Transverse colon (tissue), 4 donors: ENCODE measurements at regions of chr20 and their contacts with region 1.

Region 1: GRCh38 chr20:47677635-47678453 is 107.4 kb downstream of the SULF2 start:
- DNase-seq: peak; percentile 42
- H3K4me3 ChIP-seq: no peak overlapping the region
- H3K27ac ChIP-seq: no peak overlapping the region
- H3K4me1 ChIP-seq: peaks cover 0 to 10% (median 3%) of the 10 kb centered on the region in 4 donors
- H3K27me3 ChIP-seq: no peaks in the 10 kb centered on the region
- CTCF ChIP-seq: peak; percentile 61 to 75 (median 70)
- EP300 ChIP-seq: no peak
- POLR2A ChIP-seq: no peak

Region 2: DNA sequence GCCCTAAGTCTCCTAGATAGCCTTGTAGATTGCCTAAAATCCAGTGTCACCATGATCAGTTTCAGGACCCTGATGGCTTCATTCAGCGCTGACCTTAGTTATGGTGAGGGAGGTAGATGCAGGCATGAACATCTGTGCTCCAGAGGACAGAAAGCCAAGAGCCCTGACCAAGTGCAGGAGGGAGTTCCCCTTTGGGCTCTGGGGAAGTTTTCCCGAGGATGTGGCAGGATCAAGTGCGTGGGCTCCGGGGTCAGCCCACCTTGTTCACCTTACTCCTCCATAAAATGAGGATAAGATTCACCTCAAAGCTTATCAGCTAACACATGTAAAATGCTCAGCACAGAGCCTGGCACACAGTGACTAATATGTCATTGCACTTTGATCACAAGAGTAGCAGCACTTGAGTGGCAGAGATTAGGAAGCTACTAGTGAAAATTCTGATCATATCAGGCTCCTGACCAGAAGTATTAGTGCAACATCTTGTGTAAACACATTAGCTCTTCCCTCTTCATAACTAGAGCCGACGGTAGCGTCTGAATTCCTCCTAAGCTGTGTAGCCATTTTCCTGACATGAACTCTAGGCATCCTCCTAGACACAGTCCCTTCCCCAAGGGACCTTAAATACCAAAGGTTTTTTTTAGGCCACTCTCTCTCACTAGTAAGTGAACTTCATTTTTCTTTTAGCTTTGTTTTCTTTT is 17.8 kb before region 1 on chr20:
- in situ Hi-C with region 1: no loop called
- intact Hi-C with region 1: no loop called
- DNase-seq: no peak
- H3K4me3 ChIP-seq: no peak overlapping the region
- H3K27ac ChIP-seq: no peak overlapping the region
- H3K4me1 ChIP-seq: peaks cover 0 to 8% (median 4%) of the 10 kb centered on the region in 4 donors
- H3K27me3 ChIP-seq: no peaks in the 10 kb centered on the region
- CTCF ChIP-seq: no peak
- EP300 ChIP-seq: no peak
- POLR2A ChIP-seq: no peak

Region 3: DNA sequence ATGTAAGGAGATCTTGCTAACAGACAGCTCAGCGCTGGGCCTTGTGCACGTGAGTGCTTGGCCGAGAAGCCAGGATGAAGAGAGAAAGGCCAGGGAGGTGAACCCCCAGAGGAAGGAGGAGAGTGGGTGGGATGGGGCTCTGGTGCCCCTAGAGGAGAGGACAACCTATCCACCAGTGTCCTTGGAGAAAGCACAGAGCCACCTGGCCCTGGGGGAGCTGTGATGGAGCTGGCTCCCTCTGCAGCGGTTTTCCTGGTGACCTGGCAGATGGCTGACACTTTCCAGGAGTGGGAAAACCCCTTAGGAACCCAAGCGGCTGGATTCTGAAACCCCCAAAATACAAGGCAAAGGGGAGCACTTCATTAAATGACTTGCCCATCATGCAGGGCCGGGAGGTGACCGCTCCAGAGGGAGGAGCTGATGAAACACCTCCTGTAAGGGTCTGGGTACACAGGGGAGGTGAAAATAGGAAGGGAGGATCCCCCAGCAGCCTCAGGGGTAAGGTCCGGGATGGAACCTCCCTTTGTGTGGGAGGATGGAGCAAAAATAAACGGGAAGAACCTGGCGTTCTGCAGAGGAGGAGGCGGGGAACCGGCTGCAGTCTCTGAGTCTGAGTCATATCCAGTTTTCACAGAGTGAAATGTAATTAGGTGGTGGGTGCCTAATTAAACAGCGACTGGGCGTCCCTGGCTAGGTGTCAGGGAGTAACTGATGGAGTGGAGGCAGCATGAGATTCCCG is 27.1 kb after region 1 on chr20:
- in situ Hi-C with region 1: no loop called
- intact Hi-C with region 1: no loop called
- DNase-seq: no peak
- H3K4me3 ChIP-seq: no peak overlapping the region
- H3K27ac ChIP-seq: peak overlapping the region in 2 of 4 donors; percentile 28 to 50
- H3K4me1 ChIP-seq: peaks cover 0 to 6% (median 0%) of the 10 kb centered on the region in 4 donors
- H3K27me3 ChIP-seq: no peaks in the 10 kb centered on the region
- CTCF ChIP-seq: no peak
- EP300 ChIP-seq: no peak
- POLR2A ChIP-seq: no peak

Region 4: GRCh38 chr20:47785854-47786764 is 108.3 kb after region 1 on chr20:
- in situ Hi-C with region 1: no loop called
- intact Hi-C with region 1: loop called (anchors 10 kb)
- DNase-seq: peak; percentile 69
- H3K4me3 ChIP-seq: peak overlapping the region; percentile 28 to 75 (median 62)
- H3K27ac ChIP-seq: peak overlapping the region; percentile 86 to 90 (median 88)
- H3K4me1 ChIP-seq: peaks cover 6 to 35% (median 18%) of the 10 kb centered on the region in 4 donors
- H3K27me3 ChIP-seq: no peaks in the 10 kb centered on the region
- CTCF ChIP-seq: peak; percentile 53 to 78 (median 65)
- EP300 ChIP-seq: no peak
- POLR2A ChIP-seq: peak; percentile 63

Region 5: DNA sequence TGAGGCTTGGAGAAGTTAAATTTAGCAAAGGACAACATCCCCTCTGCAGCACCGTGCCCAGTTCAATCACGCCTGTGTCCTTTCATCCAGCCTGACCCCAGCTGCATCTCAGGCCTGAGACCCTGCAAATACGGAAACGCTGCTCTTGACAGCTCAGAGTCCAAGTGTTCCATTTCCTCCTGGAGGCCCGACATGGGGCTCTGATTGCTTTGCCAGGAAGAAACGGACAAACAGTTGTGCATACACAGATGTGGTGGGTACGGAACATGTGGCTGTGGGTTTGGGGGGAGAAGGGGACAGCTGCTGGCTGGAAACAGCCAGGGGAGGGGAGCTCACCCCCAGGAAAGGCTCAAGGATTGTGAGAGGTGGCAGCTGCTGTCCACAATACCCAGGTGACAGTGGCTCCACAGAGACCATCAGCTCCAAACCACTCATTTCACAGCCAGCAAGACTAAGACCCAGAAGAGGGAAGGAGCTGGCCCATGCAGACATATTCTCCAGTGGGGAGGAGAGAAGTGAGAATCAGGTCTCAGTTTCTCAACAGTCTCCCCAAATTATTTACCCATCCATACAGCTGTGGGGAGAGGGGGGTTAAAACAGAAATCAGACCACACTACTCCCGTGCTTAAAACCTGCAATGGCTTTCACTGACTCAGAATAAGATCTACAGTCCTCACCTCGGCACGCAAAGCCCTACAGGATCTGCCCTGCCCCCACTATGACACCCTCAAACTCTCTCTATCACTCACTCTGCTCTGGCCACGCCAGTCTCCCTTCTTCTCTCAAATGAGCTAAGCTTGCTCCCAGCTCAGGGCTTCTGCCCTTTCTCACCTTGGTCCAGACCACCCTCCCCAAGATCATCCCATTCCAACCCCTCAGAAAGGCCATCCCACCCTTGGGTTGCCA is 1060.8 kb after region 1 on chr20:
- in situ Hi-C with region 1: no loop called
- intact Hi-C with region 1: no loop called
- DNase-seq: no peak
- H3K4me3 ChIP-seq: no peak overlapping the region
- H3K27ac ChIP-seq: peak overlapping the region in 2 of 4 donors; percentile 3 to 7
- H3K4me1 ChIP-seq: peaks cover 4 to 17% (median 9%) of the 10 kb centered on the region in 4 donors
- H3K27me3 ChIP-seq: no peaks in the 10 kb centered on the region
- CTCF ChIP-seq: no peak
- EP300 ChIP-seq: no peak
- POLR2A ChIP-seq: no peak